ENCODE measurements at regions of chr1 and their contacts with region 1.

Region 1: GRCh38 chr1:203733009-203733863 is 31.7 kb upstream of the LAX1 start:
- DNase-seq: no peak
- H3K4me3 ChIP-seq: no peak overlapping the region
- CTCF ChIP-seq: no peak

Region 2: GRCh38 chr1:203368624-203369451 is 364.4 kb before region 1 on chr1:
- in situ Hi-C with region 1: loop called (anchors 10 kb)
- DNase-seq: no peak
- H3K4me3 ChIP-seq: no peak overlapping the region
- CTCF ChIP-seq: no peak

Region 3: GRCh38 chr1:203526572-203526971 is 206.7 kb before region 1 on chr1:
- in situ Hi-C with region 1: no loop called
- DNase-seq: no peak
- H3K4me3 ChIP-seq: no peak overlapping the region
- CTCF ChIP-seq: no peak